Esophagus muscularis mucosa (tissue), 4 donors: ENCODE measurements at regions of chr18 and their contacts with region 1.

Region 1: DNA sequence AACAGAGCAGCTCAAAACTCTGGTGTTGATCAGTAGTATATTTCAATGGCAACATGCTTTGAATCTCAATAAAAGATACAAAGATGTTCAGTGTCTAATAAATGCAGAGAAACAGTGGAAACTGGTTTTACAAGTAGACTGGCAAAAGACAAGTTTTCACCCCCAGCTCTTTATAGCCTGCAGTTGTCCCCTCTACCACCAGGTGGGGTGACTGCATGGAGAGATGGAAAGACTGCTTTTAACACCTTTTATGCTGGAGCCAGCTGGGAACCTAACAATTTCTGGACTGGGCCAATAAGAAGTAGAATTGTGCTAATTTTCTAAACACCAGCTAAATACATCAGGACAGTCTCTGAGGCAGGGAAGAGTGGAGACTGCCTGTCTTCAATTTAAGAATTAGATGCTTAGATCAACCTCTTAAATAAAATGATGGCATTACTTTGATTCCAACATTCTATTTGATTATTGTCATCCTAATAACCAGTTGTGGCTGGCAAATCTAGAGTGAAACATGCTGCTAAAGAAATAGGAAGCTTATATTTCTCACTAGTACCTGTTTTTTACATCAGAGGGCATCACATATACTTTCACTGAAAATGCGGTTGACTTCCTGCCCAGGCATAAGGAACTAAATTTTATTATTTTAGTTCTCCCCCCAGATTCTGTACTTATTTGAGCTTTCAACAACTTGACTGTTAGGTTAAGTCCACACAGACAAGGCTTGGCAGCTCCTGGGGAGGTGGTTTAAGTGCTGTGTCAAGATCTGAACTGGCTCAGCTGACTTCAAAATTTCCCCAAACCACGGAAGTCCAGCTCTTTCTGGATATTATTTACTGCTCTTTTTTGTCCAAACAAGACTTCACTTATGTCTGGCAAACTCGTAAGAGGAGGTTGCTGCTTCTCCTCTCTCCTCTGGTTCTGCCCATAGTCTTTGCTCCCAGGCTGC is 140.5 kb downstream of the TPGS2 start:
- DNase-seq: no peak
- H3K4me3 ChIP-seq: no peak overlapping the region
- H3K27ac ChIP-seq: no peak overlapping the region
- H3K4me1 ChIP-seq: peaks cover 0 to 41% (median 39%) of the 10 kb centered on the region in 4 donors
- H3K27me3 ChIP-seq: no peaks in the 10 kb centered on the region
- CTCF ChIP-seq: peak; percentile 87 to 93 (median 88)
- EP300 ChIP-seq: no peak
- POLR2A ChIP-seq: no peak

Region 2: GRCh38 chr18:36757081-36757480 is 68.8 kb after region 1 on chr18:
- intact Hi-C with region 1: loop called (anchors 2 kb)
- DNase-seq: no peak
- H3K4me3 ChIP-seq: no peak overlapping the region
- H3K27ac ChIP-seq: peak overlapping the region; percentile 28 to 67 (median 46)
- H3K4me1 ChIP-seq: peaks cover 3 to 39% (median 35%) of the 10 kb centered on the region in 4 donors
- H3K27me3 ChIP-seq: no peaks in the 10 kb centered on the region
- CTCF ChIP-seq: peak; percentile 70 to 75 (median 70)
- EP300 ChIP-seq: no peak
- POLR2A ChIP-seq: no peak

Region 3: GRCh38 chr18:36809590-36810381 is 121.5 kb after region 1 on chr18:
- intact Hi-C with region 1: loop called (anchors 2 kb)
- DNase-seq: no peak
- H3K4me3 ChIP-seq: no peak overlapping the region
- H3K27ac ChIP-seq: no peak overlapping the region
- H3K4me1 ChIP-seq: peaks cover 8 to 36% (median 31%) of the 10 kb centered on the region in 4 donors
- H3K27me3 ChIP-seq: no peaks in the 10 kb centered on the region
- CTCF ChIP-seq: peak; percentile 65 to 86 (median 68)
- EP300 ChIP-seq: no peak
- POLR2A ChIP-seq: no peak

Region 4: DNA sequence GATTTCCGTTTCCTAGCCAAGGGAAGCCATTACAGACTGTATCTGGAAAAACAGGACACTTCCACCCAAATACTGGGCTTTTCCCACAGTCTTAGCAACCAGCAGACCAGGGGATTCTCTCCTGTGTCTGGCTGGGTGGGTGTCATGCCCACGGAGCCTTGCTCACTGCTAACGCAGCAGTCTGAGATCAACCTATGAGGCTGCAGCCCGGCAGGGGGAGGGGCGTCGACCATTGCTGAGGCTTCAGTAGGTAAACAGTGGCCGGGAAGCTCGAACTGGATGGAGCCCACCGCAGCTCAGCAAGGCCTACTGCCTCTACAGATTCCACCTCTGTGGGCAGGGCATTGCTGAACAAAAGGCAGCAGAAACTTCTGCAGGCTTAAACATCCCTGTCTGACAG is 271.7 kb after region 1 on chr18:
- intact Hi-C with region 1: no loop called
- DNase-seq: no peak
- H3K4me3 ChIP-seq: no peak overlapping the region
- H3K27ac ChIP-seq: no peak overlapping the region
- H3K4me1 ChIP-seq: no peaks in the 10 kb centered on the region
- H3K27me3 ChIP-seq: no peaks in the 10 kb centered on the region
- CTCF ChIP-seq: no peak
- EP300 ChIP-seq: no peak
- POLR2A ChIP-seq: no peak